Heart right ventricle (tissue), 16 donors: ENCODE measurements at regions of chr1 and their contacts with region 1.

Region 1: DNA sequence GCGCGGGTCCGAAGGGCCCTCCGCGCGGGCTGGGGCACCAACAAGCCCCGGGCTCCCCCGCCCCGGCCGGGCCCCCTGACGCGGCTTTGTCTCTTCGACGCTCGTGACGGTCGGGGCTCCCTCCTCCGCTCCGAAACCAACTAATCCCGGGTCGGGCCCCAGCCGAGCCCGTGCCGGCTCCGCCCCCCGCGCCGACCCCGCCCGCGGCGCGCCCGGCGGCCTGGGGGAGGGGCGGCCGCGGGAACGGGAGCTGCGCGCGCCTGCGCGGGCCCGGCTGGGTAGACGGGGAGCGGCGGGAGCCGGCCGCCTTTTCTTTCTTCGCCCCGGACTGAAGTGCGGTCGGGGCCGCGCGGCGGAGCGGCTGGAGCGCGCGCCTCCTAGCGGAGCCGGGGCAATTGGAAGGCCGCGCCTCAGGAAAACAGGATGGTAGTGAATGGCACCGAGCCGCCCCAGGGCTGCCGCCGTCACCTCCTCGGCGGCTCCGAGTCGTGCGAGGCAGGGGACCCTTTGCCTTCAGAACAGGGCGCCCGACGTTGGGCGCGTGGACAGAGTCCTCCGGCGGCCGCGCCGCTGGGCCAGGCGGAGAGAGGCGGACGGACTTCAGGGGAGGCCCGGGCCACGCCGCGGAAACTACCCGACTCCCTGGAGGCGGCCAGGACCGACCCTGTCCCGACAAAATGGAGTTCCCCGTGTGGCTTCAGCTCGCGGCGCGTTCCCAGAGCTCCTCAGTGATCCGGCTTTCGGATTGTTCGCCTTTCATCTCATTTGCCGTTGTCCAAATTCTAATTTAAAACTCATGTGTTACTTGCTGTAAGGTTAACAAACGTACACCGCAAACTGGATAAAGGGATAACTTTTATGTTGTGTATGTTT is at the start of gene TP53BP2:
- DNase-seq: peak; percentile 85 to 91
- ATAC-seq: peak; percentile 93 to 97 (median 95)
- H3K4me3 ChIP-seq: peak within 1 kb of the TSS; percentile 76 to 95 (median 91)
- H3K27ac ChIP-seq: peak within 1 kb of the TSS; percentile 96 to 100 (median 99)
- H3K4me1 ChIP-seq: peaks cover 4 to 54% (median 42%) of the 10 kb centered on the region in 9 donors
- H3K27me3 ChIP-seq: no peaks in the 10 kb centered on the region
- CTCF ChIP-seq: peak in 8 of 9 donors; percentile 60 to 90 (median 72)
- total RNA-seq, gene TP53BP2: 16.2 to 25.3 (median 21.2) TPM

Region 2: GRCh38 chr1:223712194-223712849 is 133.7 kb before region 1 on chr1 and contains the start of gene CAPN2:
- intact Hi-C with region 1: loop called in 2 of 10 experiments (anchors 10 kb)
- DNase-seq: peak; percentile 77 to 89
- ATAC-seq: peak; percentile 87 to 97 (median 94)
- H3K4me3 ChIP-seq: peak within 1 kb of the TSS; percentile 62 to 97 (median 90)
- H3K27ac ChIP-seq: peak within 1 kb of the TSS; percentile 89 to 99 (median 98)
- H3K4me1 ChIP-seq: peaks cover 16 to 83% (median 78%) of the 10 kb centered on the region in 9 donors
- H3K27me3 ChIP-seq: no peaks in the 10 kb centered on the region
- CTCF ChIP-seq: peak; percentile 61 to 91 (median 78)
- total RNA-seq, gene CAPN2: 65.6 to 104 (median 77.6) TPM

Region 3: DNA sequence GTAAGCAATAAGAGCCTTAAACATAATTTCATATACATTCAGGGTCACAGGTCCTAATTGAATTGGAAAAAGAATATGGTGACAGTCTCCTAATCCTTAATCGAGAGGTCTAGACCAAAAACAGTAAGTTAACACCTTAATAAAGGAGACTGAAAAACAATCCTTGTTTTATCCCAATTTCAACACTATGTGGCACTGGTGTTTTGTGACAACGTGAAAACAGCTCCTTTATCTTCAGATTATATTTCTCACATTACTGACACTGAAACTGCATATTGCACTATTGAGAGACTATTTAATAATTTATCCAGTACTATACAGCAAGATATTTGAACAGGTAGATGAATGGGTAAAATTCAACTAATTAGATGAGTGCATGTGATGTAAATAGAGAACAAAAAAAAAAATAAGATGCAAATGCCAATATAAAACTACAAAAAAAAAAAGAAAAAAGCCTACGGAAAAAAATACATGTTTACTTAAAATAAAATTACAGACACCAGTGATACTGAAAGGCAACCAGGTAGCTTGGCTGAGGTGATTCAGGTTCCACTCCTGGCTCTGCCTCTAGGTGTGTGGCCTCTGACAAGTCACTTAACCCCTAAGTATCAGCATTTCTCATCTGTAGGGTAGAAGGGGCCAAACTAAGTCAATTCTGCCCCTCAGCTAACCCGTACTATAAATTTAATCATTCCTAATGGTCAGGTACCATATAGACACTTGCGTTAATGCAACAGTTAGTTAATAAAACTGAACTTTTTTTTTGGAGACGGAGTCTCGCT is 34.2 kb before region 1 on chr1:
- intact Hi-C with region 1: loop called in 3 of 10 experiments (anchors 5 kb)
- DNase-seq: no peak
- ATAC-seq: peak in 5 of 8 donors; percentile 35 to 66 (median 52)
- H3K4me3 ChIP-seq: no peak overlapping the region
- H3K27ac ChIP-seq: no peak overlapping the region
- H3K4me1 ChIP-seq: peaks cover 0 to 22% (median 10%) of the 10 kb centered on the region in 9 donors
- H3K27me3 ChIP-seq: no peaks in the 10 kb centered on the region
- CTCF ChIP-seq: peak in 8 of 9 donors; percentile 29 to 75 (median 58)

Region 4: DNA sequence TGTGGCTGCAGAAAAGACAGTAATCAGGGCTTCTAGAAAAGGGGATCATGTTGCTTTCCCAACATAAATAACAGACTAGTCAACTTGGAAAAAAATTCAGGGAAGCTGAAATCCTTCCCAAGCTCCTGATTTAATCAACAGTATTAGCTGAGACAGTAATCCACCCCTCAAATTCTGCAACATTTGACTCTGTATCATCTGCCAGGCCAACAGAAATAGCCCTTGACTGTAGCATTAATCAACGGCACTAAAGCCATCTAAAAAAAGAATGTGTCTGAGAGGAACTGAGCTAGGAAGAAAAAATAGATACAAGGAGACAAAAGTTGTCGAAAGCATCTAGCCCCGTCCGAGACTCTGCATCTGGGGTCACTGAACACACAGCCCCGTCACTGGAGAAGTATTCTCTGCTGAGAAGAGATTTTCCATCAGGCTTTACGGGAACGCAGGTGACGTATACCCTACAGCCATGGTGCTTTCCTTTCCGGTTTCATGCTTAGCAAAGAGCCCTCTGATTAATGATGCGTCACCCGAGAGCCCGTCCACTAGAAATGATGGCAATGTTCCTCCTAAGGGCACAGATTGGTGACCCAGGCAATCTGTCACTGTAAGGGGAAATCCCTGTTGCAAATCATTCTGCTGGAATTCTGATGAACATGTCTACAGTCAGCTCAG is 41.8 kb after region 1 on chr1:
- intact Hi-C with region 1: loop called in 1 of 10 experiments (anchors 5 kb)
- DNase-seq: peak in 1 of 2 donors; percentile 42
- ATAC-seq: peak; percentile 46 to 98 (median 94)
- H3K4me3 ChIP-seq: peak overlapping the region in 5 of 10 donors; percentile 21 to 33 (median 25)
- H3K27ac ChIP-seq: peak overlapping the region in 9 of 10 donors; percentile 10 to 80 (median 74)
- H3K4me1 ChIP-seq: peaks cover 0 to 11% (median 0%) of the 10 kb centered on the region in 9 donors
- H3K27me3 ChIP-seq: no peaks in the 10 kb centered on the region
- CTCF ChIP-seq: no peak